ENCODE measurements at regions of chr10 and their contacts with region 1.

Region 1: DNA sequence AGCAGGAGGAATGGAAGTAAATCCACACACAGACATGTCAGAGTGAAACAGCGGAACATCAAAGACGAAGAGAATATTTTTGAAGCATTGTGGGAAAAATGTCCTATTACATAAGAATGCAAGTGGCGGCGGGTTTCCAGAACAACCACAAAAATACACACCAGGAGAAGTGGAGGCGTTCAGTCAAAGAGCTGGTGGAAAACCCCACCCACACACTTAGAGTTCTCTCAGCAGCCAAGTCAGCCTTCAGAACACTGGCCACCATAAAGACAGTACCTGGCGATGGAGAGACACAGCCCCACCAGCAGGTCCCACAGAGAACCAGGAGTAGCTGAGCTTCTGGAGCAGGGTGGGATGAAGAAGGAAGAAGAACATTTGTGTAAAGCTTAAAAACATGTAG is 23.7 kb downstream of the NKX6-2 start:
- DNase-seq: no peak

Region 2: GRCh38 chr10:132654702-132655661 is 107.3 kb before region 1 on chr10:
- intact Hi-C with region 1: loop called (anchors 10 kb)
- DNase-seq: peak; percentile 31

Measured in cardiac septum (tissue), 1 donor.